ENCODE measurements at regions of chr7 and their contacts with region 1.

Region 1: GRCh38 chr7:23226844-23227450 is 19.6 kb upstream of the GPNMB start:
- DNase-seq: no peak
- ATAC-seq: no peak
- H3K4me3 ChIP-seq: no peak overlapping the region
- H3K27ac ChIP-seq: no peak overlapping the region
- H3K4me1 ChIP-seq: no peaks in the 10 kb centered on the region
- H3K27me3 ChIP-seq: peaks cover 6% of the 10 kb centered on the region; the same call in 1 of the 2 replicates
- CTCF ChIP-seq: no peak
- POLR2A ChIP-seq: no peak
- RAD21 ChIP-seq: no peak

Region 2: DNA sequence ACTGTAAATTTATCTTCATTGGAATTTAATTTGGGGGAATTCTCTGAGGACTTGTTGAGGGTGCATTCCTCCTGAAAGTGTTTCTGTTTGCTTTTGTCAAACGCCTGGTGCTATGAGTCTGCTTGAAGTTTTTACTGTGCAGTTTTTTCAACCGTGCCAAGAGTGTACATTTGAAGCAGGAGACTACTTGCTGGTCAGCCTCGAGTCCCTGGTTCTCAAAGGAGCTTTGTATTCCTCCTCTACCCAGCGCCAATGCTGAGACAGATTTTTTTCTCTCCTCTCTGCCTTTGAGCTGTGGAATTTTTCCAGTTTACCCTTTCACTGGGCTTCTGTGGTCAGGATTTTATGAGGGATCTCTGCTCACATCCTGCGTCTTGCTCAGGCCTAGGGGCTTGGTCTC is 1119.2 kb after region 1 on chr7:
- CTCF ChIA-PET with region 1: no interaction called
- POLR2A ChIA-PET with region 1: interaction called, 19 read pairs
- dilution Hi-C with region 1: no loop called
- in situ Hi-C with region 1: no loop called
- intact Hi-C with region 1: no loop called
- DNase-seq: no peak
- ATAC-seq: no peak
- H3K4me3 ChIP-seq: no peak overlapping the region
- H3K27ac ChIP-seq: no peak overlapping the region
- H3K4me1 ChIP-seq: no peaks in the 10 kb centered on the region
- H3K27me3 ChIP-seq: no peaks in the 10 kb centered on the region
- CTCF ChIP-seq: no peak
- POLR2A ChIP-seq: no peak
- RAD21 ChIP-seq: no peak

Measured in IMR-90 (cell line).